Panc1 (cell line): ENCODE measurements at regions of chr5 and their contacts with region 1.

Region 1: GRCh38 chr5:72818866-72819534 is 2.5 kb downstream of the TNPO1 start:
- DNase-seq: no peak
- ATAC-seq: no peak
- H3K4me3 ChIP-seq: peak overlapping the region; percentile 38 to 90
- H3K27ac ChIP-seq: peak overlapping the region; percentile 98
- H3K4me1 ChIP-seq: peaks cover 53% of the 10 kb centered on the region
- H3K27me3 ChIP-seq: no peaks in the 10 kb centered on the region
- CTCF ChIP-seq: peak; percentile 94

Region 2: DNA sequence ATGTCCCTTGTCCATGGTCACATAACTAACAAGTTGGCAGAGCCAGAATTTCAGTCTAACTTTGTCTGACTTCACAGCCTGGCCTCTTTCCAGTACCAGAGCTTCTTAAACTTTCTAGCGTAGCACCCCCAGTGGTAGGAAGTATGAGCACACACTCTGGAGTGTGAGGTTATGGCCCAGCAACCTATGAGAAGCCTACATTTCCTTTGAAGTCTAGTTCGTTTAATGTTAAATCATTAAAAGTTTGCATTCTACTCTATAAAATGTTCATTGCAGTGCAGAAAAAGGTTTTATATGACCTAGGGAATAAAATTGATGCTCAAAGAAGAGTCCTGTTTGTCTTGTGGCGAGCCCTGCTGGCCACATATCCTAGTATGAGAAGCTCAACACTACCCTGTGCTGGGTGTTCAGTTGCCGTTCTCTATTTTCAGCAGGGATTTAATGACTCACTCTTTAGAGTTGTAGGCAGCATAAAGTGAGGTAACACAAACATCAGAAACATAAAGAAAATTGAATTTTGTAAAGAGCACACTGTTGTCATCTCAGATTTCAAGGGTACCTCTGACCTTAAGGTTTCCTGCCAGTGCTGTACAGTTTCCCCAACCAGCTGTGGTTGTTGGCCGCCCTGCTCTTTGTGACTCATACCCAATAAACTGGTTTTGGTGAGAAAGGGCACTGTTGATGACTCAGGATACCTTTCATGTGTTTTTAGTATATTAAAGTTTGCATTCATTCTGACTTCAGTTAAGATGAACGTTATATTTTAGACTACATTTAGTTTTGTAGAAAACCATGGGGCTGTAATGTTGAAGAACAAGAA is 1217.6 kb before region 1 on chr5:
- CTCF ChIA-PET with region 1: no interaction called
- POLR2A ChIA-PET with region 1: no interaction called
- in situ Hi-C with region 1: no loop called
- intact Hi-C with region 1: no loop called
- DNase-seq: peak; percentile 91
- ATAC-seq: peak; percentile 95
- H3K4me3 ChIP-seq: peak overlapping the region in 1 of 2 experiments; percentile 1; a peak in 1 of 4 replicates
- H3K27ac ChIP-seq: peak overlapping the region; percentile 69
- H3K4me1 ChIP-seq: peaks cover 25% of the 10 kb centered on the region
- H3K27me3 ChIP-seq: no peaks in the 10 kb centered on the region
- CTCF ChIP-seq: peak; percentile 86

Region 3: GRCh38 chr5:72366324-72366976 is 452.6 kb before region 1 on chr5:
- CTCF ChIA-PET with region 1: interaction called, 4 read pairs
- POLR2A ChIA-PET with region 1: no interaction called
- in situ Hi-C with region 1: no loop called
- intact Hi-C with region 1: loop called (anchors 2 kb)
- DNase-seq: peak; percentile 62
- ATAC-seq: peak; percentile 93
- H3K4me3 ChIP-seq: no peak overlapping the region
- H3K27ac ChIP-seq: no peak overlapping the region
- H3K4me1 ChIP-seq: 0 out of 2 replicates have a peak, but pooled peaks cover 2% of the 10 kb centered on the region
- H3K27me3 ChIP-seq: no peaks in the 10 kb centered on the region
- CTCF ChIP-seq: peak; percentile 85

Region 4: DNA sequence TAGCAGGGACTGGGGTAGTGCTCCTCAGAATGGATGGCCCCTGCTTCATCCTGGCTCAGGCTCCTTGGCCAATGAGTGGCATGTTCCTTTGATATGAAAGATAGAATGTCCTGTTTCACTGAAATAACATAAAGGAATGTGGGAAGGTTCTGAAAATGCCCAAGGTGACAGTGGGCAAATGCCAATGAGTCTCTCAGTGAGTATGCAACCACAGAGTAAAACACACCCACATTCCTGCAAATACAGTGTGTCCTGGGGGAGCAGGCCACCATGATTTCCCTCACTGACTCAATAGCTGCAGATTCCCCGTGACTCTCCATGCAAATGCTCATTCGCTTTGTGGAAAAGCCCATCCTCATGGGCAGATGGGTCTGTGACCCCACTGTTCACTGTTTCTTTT is 348.2 kb before region 1 on chr5:
- CTCF ChIA-PET with region 1: no interaction called
- POLR2A ChIA-PET with region 1: interaction called, 10 read pairs
- in situ Hi-C with region 1: no loop called
- intact Hi-C with region 1: no loop called
- DNase-seq: no peak
- ATAC-seq: no peak
- H3K4me3 ChIP-seq: no peak overlapping the region
- H3K27ac ChIP-seq: no peak overlapping the region
- H3K4me1 ChIP-seq: no peaks in the 10 kb centered on the region
- H3K27me3 ChIP-seq: no peaks in the 10 kb centered on the region; the same call in 1 of the 2 replicates
- CTCF ChIP-seq: no peak

Region 5: DNA sequence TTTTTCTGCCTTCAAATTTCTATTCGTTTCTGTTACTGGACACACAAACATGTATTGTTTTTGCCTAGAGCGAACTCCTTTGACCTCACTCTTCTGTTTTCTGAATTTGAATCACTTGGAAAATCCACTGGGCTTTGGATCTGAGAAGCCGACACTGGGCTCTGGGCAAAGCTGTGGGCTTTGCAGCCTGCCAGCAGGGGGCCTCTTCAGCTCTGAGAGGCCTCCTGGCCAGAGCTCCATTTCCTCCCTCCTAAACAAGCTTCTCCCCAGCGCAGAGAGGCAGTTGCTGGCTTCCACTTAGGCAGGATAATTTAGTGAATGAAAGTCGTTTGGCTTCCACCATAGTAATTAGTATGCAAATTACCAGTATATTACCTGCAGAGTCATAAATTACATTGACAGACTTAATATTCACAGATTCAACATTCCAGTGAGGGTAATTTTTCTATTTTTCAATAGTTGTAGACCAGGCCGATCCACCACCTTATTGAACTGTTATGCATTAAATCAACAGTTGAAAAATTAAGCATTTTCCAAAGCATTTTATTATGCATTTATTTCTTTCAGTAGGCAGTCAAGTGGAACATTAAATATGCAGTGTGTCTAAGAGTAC is 207.8 kb before region 1 on chr5:
- CTCF ChIA-PET with region 1: interaction called, 11 read pairs
- POLR2A ChIA-PET with region 1: interaction called, 5 read pairs
- in situ Hi-C with region 1: no loop called
- intact Hi-C with region 1: loop called (anchors 5 kb)
- DNase-seq: peak; percentile 41
- ATAC-seq: peak; percentile 100
- H3K4me3 ChIP-seq: no peak overlapping the region
- H3K27ac ChIP-seq: no peak overlapping the region
- H3K4me1 ChIP-seq: peaks cover 5% of the 10 kb centered on the region; the same call in 1 of the 2 replicates
- H3K27me3 ChIP-seq: no peaks in the 10 kb centered on the region
- CTCF ChIP-seq: peak; percentile 95